ENCODE measurements at regions of chr15 and their contacts with region 1.

Region 1: GRCh38 chr15:78909791-78910228 is 35.0 kb downstream of the CTSH start:
- DNase-seq: no peak

Region 2: DNA sequence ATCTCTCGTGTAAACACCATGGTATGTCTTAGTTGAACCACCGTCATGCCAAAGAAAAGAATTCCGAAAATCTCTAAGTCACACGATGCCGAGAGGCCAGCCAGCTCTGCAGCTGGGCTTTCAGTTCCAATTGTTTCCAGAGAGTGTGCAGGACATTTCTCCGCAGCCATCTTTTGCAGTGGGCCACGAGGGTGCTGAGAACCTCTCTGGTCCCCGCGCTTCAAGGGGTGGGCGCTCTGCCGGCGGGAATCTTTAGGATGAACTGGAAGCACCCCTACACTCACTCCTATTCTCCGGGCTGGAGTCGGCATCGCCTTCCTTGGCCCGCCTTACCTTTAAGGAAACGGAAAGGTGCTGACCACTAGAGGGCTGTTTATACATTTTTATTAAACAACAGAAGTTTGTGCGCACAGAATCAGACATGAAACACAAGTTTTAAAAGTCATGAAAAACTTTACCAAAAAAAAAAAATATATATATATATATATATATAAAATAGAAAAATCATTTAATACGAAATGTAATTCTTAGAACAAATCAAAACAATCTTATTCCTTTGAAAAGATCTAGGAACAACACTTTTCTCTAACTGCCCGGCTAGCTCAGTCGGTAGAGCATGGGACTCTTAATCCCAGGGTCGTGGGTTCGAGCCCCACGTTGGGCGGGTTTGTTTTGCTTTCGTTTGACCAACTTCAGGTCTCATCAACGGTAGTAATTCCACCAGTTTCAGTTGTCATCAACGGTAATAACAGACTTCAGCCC is 49.7 kb before region 1 on chr15:
- intact Hi-C with region 1: no loop called
- DNase-seq: no peak

Region 3: GRCh38 chr15:78979456-78980320 is 69.9 kb after region 1 on chr15:
- intact Hi-C with region 1: loop called (anchors 5 kb)
- DNase-seq: no peak

Region 4: DNA sequence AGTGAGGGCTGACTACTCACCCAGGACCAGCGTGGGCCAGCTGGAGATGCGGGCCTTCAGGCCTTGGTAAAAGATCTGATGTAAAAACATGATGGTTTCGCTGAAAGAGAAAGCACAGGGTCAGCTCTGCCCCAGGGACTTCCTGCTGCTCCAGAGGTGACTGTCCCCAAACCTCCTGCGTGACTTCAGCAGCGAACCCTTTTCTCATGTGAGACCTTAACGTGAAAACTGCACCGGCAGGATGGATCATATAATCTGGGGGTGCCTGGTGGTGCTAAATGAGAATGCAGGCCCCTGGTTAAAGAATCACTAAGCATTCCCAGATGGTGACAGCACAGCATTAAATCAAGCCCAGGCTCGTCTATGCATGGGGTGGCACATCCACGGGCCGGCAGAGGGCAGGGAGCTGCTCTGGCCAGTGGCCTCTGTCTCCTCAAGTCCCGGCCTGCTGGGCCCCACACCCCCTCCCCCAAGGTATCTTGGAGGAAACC is 125.3 kb after region 1 on chr15:
- intact Hi-C with region 1: no loop called
- DNase-seq: no peak

Measured in cardiac septum (tissue), 1 donor.